Naive thymus-derived CD8-positive, alpha-beta T cell (primary cell): ENCODE measurements at regions of chr22 and their contacts with region 1.

Region 1: GRCh38 chr22:41285820-41286638 is at the start of gene RANGAP1:
- DNase-seq: peak; percentile 93 to 99 (median 98)
- ATAC-seq: peak; percentile 88 to 94
- H3K4me3 Mint-ChIP-seq: peak within 1 kb of the TSS; percentile 90 to 99 (median 96)
- H3K27ac Mint-ChIP-seq: peak within 1 kb of the TSS; percentile 91 to 100 (median 99)
- H3K4me1 Mint-ChIP-seq: peaks cover 12 to 43% (median 36%) of the 10 kb centered on the region in 4 donors
- H3K27me3 Mint-ChIP-seq: no peaks in the 10 kb centered on the region
- polyA plus RNA-seq, gene RANGAP1: 18.9 to 30.1 (median 23.8) TPM

Region 2: GRCh38 chr22:40950962-40951794 is 334.9 kb before region 1 on chr22 and contains the start of gene RBX1:
- POLR2A ChIA-PET with region 1: interaction called, 13 read pairs
- DNase-seq: peak; percentile 98 to 100 (median 99)
- ATAC-seq: peak; percentile 80 to 82
- H3K4me3 Mint-ChIP-seq: peak within 1 kb of the TSS; percentile 97 to 100 (median 99)
- H3K27ac Mint-ChIP-seq: peak within 1 kb of the TSS; percentile 98 to 100 (median 99)
- H3K4me1 Mint-ChIP-seq: peaks cover 12 to 39% (median 32%) of the 10 kb centered on the region in 4 donors
- H3K27me3 Mint-ChIP-seq: peaks cover 0 to 2% (median 0%) of the 10 kb centered on the region in 5 donors
- polyA plus RNA-seq, gene RBX1: 134 to 152 (median 148) TPM

Region 3: GRCh38 chr22:41237707-41238569 is 48.1 kb before region 1 on chr22:
- POLR2A ChIA-PET with region 1: interaction called, 16 read pairs
- DNase-seq: peak in 9 of 10 donors; percentile 71 to 89 (median 82)
- ATAC-seq: peak; percentile 96 to 97
- H3K4me3 Mint-ChIP-seq: peak overlapping the region in 9 of 10 donors; percentile 50 to 81 (median 71)
- H3K27ac Mint-ChIP-seq: peak overlapping the region in 3 of 10 donors; percentile 64 to 79 (median 67)
- H3K4me1 Mint-ChIP-seq: peaks cover 3 to 17% (median 5%) of the 10 kb centered on the region in 4 donors
- H3K27me3 Mint-ChIP-seq: no peaks in the 10 kb centered on the region

Region 4: GRCh38 chr22:41248314-41248713 is 37.7 kb before region 1 on chr22:
- POLR2A ChIA-PET with region 1: no interaction called
- DNase-seq: no peak
- ATAC-seq: no peak
- H3K4me3 Mint-ChIP-seq: no peak overlapping the region
- H3K27ac Mint-ChIP-seq: no peak overlapping the region
- H3K4me1 Mint-ChIP-seq: no peaks in the 10 kb centered on the region
- H3K27me3 Mint-ChIP-seq: no peaks in the 10 kb centered on the region

Region 5: GRCh38 chr22:41301105-41302020 is 15.3 kb after region 1 on chr22 and contains the start of gene ZC3H7B:
- POLR2A ChIA-PET with region 1: interaction called, 112 read pairs
- DNase-seq: peak; percentile 76 to 90 (median 84)
- ATAC-seq: peak; percentile 97 to 98
- H3K4me3 Mint-ChIP-seq: peak within 1 kb of the TSS; percentile 76 to 93 (median 84)
- H3K27ac Mint-ChIP-seq: peak within 1 kb of the TSS; percentile 80 to 96 (median 91)
- H3K4me1 Mint-ChIP-seq: peaks cover 19 to 37% (median 33%) of the 10 kb centered on the region in 4 donors
- H3K27me3 Mint-ChIP-seq: no peaks in the 10 kb centered on the region
- polyA plus RNA-seq, gene ZC3H7B: 0.65 to 1.5 (median 1.2) TPM

Region 6: GRCh38 chr22:41381329-41382097 is 95.5 kb after region 1 on chr22 and contains the start of gene TEF:
- POLR2A ChIA-PET with region 1: interaction called, 47 read pairs
- DNase-seq: peak; percentile 95 to 100 (median 99)
- ATAC-seq: peak; percentile 83 to 86
- H3K4me3 Mint-ChIP-seq: peak within 1 kb of the TSS; percentile 88 to 97 (median 92)
- H3K27ac Mint-ChIP-seq: peak within 1 kb of the TSS; percentile 92 to 99 (median 98)
- H3K4me1 Mint-ChIP-seq: peaks cover 6 to 24% (median 21%) of the 10 kb centered on the region in 4 donors
- H3K27me3 Mint-ChIP-seq: no peaks in the 10 kb centered on the region
- polyA plus RNA-seq, gene TEF: 2.0 to 5.7 (median 4.4) TPM

Region 7: GRCh38 chr22:41589391-41590241 is 303.6 kb after region 1 on chr22 and contains the start of gene PMM1:
- POLR2A ChIA-PET with region 1: interaction called, 10 read pairs
- DNase-seq: peak; percentile 98 to 100 (median 100)
- ATAC-seq: peak; percentile 94 to 97
- H3K4me3 Mint-ChIP-seq: peak within 1 kb of the TSS; percentile 84 to 96 (median 94)
- H3K27ac Mint-ChIP-seq: peak within 1 kb of the TSS; percentile 28 to 95 (median 89)
- H3K4me1 Mint-ChIP-seq: peaks cover 5 to 30% (median 15%) of the 10 kb centered on the region in 4 donors
- H3K27me3 Mint-ChIP-seq: no peaks in the 10 kb centered on the region
- polyA plus RNA-seq, gene PMM1: 29.9 to 32.8 (median 32.4) TPM